Heart right ventricle (tissue), 16 donors: ENCODE measurements at regions of chr1 and their contacts with region 1.

Region 1: DNA sequence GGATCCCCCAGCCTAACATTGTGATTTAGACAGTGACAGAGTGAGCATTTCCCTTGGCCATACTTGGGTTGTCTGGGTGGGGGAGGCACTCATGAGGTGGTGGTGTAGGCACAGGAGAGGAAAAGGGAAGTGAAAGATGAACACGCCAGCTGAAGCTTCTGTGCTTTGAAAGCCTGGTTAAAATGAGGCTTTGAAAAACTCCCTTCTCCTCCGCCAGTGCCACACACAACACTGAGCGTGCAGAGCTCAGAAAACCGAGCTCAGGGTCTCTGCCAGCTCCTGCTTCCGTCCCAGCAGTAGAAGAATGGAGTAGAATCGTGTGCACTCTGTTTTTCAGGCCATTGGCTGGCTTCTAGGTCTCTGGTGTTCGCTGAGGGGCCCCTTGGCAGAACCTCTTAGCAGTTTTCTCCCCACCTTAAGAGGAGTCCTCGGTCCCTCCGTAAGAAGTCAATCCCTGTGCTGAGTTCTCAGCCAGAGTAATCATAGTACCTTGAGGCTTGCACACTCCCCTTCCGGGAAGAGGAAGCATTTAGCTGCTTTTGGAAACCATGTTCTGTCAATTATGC is 12.9 kb downstream of the PLEKHM2 start:
- DNase-seq: no peak
- ATAC-seq: peak in 6 of 8 donors; percentile 6 to 51 (median 30)
- H3K4me3 ChIP-seq: peak overlapping the region in 2 of 10 donors; percentile 7 to 20
- H3K27ac ChIP-seq: peak overlapping the region in 8 of 10 donors; percentile 3 to 85 (median 26)
- H3K4me1 ChIP-seq: peaks cover 11 to 71% (median 56%) of the 10 kb centered on the region in 9 donors
- H3K27me3 ChIP-seq: no peaks in the 10 kb centered on the region
- CTCF ChIP-seq: no peak

Region 2: DNA sequence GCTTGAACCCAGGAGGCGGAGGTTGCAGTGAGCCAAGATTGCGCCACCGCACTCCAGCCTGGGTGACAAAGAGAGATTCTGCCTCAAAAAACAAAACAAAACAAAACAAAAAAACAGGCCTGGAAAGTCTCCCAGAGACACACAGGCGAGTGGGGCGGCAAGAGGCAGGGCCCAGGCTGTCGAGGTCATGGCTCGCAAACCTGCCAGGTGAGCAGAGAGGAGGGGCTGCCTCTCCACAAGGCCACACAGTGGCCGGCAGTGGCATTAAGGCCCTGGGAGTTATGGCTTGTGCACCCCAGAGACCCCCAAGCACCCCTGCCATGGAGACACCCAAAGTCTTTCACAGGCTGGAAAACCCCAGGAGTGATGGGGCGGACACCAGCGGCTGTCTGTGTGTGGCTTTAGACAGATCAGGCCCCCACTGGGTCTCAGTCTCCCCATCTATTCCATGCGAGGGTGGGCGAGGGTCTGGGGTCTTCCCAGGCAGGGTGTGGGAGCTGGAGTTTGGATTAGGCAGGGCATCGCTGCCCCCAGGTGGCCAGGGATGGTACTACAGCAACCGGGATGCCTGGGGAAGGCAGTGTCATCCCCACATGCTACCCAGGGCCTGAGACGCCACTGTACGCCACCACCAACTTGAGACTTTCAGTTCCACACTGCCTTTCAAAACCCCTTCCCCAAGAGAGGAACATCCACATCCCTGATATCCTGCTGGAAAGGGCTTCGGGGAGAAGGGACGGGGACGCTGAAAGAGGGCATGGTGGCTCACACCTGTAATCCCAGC is 266.1 kb before region 1 on chr1:
- intact Hi-C with region 1: no loop called
- DNase-seq: peak; percentile 70 to 77
- ATAC-seq: peak; percentile 53 to 81 (median 72)
- H3K4me3 ChIP-seq: no peak overlapping the region
- H3K27ac ChIP-seq: no peak overlapping the region
- H3K4me1 ChIP-seq: peaks cover 5 to 28% (median 11%) of the 10 kb centered on the region in 9 donors
- H3K27me3 ChIP-seq: no peaks in the 10 kb centered on the region
- CTCF ChIP-seq: peak; percentile 94 to 99 (median 96)

Region 3: DNA sequence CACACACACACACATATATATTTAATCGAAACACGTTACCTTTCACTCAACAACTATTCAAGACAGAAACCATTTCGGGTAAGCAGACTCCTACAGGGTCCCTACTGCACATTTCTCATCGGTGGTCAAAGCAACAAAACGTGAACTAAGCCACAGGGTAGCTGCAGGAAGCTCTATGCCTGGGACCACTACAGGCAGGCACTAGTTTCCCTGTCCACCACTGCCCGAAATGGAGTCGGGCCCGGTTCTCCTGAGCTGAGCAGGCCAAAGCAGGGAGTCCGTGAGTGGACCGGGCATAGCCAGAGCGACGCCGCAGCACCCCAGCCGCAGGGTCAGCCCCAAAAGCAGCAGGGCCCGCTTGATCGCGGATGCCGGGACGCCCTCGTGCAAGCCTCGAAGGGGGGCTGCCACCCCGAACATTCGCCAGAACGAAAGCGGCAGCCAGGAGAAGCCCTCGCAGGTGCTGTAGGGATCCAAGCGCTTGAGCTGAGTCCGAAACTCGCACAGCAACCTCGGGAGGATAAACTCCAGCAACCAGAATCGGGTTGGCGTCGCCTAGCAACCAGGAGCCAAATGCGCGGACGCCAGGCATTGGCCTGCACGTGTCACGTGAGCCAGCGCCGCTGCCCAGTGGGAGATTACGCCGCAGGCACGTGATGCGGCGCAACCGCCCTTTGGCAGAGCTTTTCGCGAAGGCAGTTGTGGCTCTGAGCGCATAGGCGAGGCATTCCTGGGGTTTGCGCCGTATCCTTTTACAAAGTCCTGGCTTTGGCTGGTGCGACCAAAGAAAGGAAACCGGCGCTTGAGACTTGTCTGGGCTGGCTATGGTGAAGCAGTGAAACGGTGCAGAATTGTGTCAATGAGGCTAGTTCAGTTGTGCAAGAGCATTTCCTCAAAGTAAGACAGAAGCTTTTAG is 93.7 kb before region 1 on chr1:
- intact Hi-C with region 1: loop called in 1 of 10 experiments (anchors 10 kb)
- DNase-seq: peak; percentile 96 to 97
- ATAC-seq: peak; percentile 96 to 99 (median 99)
- H3K4me3 ChIP-seq: peak overlapping the region; percentile 68 to 95 (median 75)
- H3K27ac ChIP-seq: peak overlapping the region in 9 of 10 donors; percentile 73 to 89 (median 79)
- H3K4me1 ChIP-seq: peaks cover 2 to 27% (median 18%) of the 10 kb centered on the region in 9 donors
- H3K27me3 ChIP-seq: no peaks in the 10 kb centered on the region
- CTCF ChIP-seq: no peak

Region 4: DNA sequence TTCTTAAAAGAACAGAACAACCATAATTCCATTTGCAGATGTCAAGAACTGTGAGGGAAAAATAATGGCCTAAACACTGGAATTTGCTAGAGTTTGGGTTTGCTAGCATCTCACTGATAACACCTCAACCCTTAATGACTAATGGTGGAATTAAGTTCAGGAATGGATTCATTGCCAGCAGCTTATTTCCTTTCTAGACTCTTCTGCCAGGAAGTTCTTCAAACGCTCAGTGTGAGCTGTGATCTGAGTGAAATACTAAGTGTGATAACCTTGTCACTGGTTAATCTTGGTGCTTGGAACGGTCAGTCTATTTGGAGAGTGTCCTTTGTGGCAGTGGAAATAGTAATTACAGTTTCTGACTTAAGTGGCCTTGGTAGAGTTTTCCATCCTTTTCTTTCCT is 34.6 kb before region 1 on chr1:
- intact Hi-C with region 1: no loop called
- DNase-seq: no peak
- ATAC-seq: peak in 5 of 8 donors; percentile 61 to 92 (median 77)
- H3K4me3 ChIP-seq: no peak overlapping the region
- H3K27ac ChIP-seq: peak overlapping the region in 3 of 10 donors; percentile 10 to 42 (median 17)
- H3K4me1 ChIP-seq: peaks cover 0 to 15% (median under 1%) of the 10 kb centered on the region in 9 donors
- H3K27me3 ChIP-seq: no peaks in the 10 kb centered on the region
- CTCF ChIP-seq: no peak